Esophagus muscularis mucosa (tissue), 4 donors: ENCODE measurements at regions of chr14 and their contacts with region 1.

Region 1: DNA sequence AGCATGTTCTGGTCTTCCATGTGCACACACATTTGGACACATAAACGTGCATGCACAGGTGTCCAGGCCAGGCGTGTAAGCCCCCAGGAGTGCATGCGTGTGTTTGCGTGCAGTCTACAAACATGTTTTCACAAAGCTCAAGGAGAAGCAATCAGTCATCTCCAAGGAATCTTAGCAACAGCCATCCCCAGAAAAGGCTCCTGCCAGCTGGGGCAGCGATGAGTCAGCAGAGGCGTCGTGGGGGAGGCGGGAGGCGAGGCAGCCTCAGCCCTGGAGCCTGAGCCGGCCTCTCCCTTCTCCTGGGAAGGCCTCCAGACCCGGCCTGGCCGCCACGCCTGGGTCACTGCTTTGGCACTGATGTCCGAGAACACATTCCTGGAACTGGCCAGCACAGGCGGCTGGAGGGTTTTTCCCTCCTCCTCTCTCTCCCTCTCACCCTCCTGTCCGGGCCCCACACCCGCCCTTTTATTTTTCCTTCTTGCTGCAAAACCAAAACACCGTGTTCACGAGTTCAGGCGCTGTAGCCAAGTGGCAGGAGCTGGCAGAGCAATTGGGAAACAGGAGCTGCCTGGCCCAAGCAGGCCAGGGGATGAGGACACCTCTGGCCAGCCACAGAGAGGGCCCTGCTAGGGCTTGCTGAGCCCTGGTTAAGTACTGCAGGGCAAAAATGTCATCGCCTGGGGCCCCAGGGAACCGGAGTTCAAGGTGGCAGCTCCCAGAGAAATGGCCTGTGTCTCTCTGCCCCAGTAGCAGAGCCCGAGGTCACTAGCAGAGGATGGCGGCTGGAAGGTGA is 92.7 kb downstream of the LRRC74A start:
- DNase-seq: peak; percentile 99
- H3K4me3 ChIP-seq: peak overlapping the region; percentile 6 to 33 (median 22)
- H3K27ac ChIP-seq: peak overlapping the region; percentile 90 to 96 (median 94)
- H3K4me1 ChIP-seq: peaks cover 53 to 85% (median 61%) of the 10 kb centered on the region in 4 donors
- H3K27me3 ChIP-seq: no peaks in the 10 kb centered on the region
- CTCF ChIP-seq: peak in 1 of 3 experiments; percentile 28
- EP300 ChIP-seq: peak; percentile 40
- POLR2A ChIP-seq: no peak

Region 2: DNA sequence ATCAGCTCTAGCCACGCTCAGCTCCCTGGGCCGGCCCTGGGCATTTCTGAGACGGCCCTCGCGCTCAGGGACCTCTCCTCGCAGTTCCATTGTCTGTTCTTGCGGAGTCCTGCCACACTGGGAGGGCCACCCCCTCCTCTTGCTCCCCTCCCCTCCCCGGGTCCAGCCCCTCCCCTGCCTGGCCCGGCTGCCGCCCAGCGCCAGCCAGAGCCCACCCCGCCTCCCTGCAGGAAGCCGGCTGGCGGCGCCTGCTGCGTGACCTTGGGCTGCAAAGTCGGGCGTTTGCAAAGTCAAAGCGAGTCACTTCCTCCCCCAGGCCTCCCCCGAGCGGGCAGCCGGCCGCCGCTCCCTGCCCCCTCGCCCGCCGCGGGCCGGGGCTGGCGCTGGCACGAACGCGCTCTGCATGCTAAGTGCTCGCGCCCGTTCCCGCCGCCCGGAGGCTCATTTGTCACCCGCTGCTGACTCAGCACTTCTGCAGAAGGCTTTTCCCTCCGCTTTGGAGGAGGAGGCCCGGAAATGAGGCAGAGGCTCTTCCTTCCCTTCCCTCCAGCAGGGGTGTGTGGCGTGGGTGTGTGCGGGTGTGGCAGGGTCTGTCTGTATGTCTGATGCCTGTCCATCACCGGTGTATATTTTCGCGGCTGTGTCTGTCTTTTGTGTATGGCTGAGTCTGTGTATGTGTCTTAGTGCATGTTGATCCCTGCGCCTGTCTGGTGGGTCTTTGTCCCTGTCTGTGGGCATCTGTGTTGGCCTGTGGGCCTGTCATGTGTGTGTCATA is 37.6 kb after region 1 on chr14:
- intact Hi-C with region 1: loop called (anchors 5 kb)
- DNase-seq: peak; percentile 96
- H3K4me3 ChIP-seq: peak overlapping the region; percentile 51 to 58 (median 52)
- H3K27ac ChIP-seq: peak overlapping the region; percentile 91 to 97 (median 93)
- H3K4me1 ChIP-seq: peaks cover 62 to 86% (median 80%) of the 10 kb centered on the region in 4 donors
- H3K27me3 ChIP-seq: no peaks in the 10 kb centered on the region
- CTCF ChIP-seq: peak in 2 of 3 experiments; percentile 23 to 28
- EP300 ChIP-seq: no peak
- POLR2A ChIP-seq: no peak

Region 3: GRCh38 chr14:77028384-77029231 is 109.7 kb after region 1 on chr14 and contains the start of gene IRF2BPL:
- intact Hi-C with region 1: loop called (anchors 5 kb)
- DNase-seq: peak; percentile 99
- H3K4me3 ChIP-seq: peak within 1 kb of the TSS; percentile 79 to 93 (median 86)
- H3K27ac ChIP-seq: peak within 1 kb of the TSS; percentile 98 to 100 (median 100)
- H3K4me1 ChIP-seq: peaks cover 65 to 80% (median 78%) of the 10 kb centered on the region in 4 donors
- H3K27me3 ChIP-seq: no peaks in the 10 kb centered on the region
- CTCF ChIP-seq: no peak
- EP300 ChIP-seq: peak; percentile 80
- POLR2A ChIP-seq: peak; percentile 88
- total RNA-seq, gene IRF2BPL: 58.6 to 105 (median 98.4) TPM

Region 4: DNA sequence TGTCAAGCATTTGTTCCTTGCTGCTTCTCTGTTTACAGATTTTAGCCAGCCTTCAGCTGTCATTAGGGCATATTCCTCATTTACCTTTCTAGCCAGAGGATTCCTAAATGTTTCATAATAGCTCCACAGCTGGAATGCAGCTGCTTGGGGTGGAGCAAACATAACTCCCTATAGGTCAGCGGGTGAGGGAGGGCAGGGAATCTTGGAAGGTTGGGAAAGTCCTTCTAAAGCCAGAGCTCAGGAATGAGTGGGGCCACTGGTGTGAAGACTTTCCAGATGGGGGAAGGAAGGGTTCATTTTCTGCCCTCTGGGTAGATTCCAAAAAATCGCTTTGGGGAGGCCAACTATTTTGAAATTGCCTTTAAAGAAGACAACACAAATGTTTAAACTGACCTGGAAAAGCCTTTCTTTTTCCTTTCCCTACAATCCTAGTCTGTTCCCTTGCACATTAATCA is 125.9 kb after region 1 on chr14:
- intact Hi-C with region 1: loop called (anchors 2 kb)
- DNase-seq: no peak
- H3K4me3 ChIP-seq: no peak overlapping the region
- H3K27ac ChIP-seq: peak overlapping the region; percentile 93 to 100 (median 98)
- H3K4me1 ChIP-seq: peaks cover 67 to 74% (median 71%) of the 10 kb centered on the region in 4 donors
- H3K27me3 ChIP-seq: no peaks in the 10 kb centered on the region
- CTCF ChIP-seq: no peak
- EP300 ChIP-seq: no peak
- POLR2A ChIP-seq: no peak